ENCODE measurements at regions of chr9 and their contacts with region 1.

Region 1: DNA sequence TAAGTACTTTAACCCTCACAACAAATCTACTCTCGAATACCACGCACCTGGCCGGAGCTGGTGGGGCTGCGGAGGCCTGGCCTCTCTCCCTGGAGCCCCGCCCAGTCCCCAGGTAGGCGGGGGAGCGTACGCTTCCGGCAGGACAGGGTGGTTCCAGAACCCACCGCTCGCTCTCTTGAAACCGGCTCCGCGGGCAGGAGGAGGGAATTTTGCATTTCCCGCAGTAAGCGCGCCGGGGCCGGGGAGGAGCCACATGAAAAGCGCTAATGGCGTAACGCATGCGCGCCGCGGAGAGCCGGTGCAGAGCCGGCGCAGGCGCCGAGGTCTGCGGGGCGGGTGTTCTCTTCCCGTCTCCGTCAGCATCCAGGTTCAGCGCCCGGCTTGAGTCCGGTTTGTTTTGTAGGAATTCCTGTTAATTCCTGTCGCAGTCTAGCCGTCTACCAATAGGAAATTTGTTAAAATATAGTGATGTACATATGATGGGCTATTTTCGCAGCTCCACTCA is 20.8 kb downstream of the CAVIN4 start:
- DNase-seq: peak; percentile 72 to 84 (median 80)
- ATAC-seq: peak; percentile 86
- H3K4me3 ChIP-seq: peak overlapping the region; percentile 65
- H3K4me3 Mint-ChIP-seq: peak overlapping the region; percentile 68 to 90 (median 82)
- H3K27ac ChIP-seq: peak overlapping the region; percentile 36
- H3K27ac Mint-ChIP-seq: peak overlapping the region in 8 of 9 donors; percentile 66 to 90 (median 78)
- H3K4me1 ChIP-seq: peaks cover 7 to 8% of the 10 kb centered on the region in 2 donors
- H3K4me1 Mint-ChIP-seq: peaks cover 12 to 30% (median 22%) of the 10 kb centered on the region in 7 donors
- H3K27me3 ChIP-seq: no peaks in the 10 kb centered on the region
- H3K27me3 Mint-ChIP-seq: peaks cover 0 to 27% (median 0%) of the 10 kb centered on the region in 5 donors

Region 2: GRCh38 chr9:99221621-99222415 is 1376.9 kb before region 1 on chr9 and contains the starts of genes ALG2 and SEC61B:
- CTCF ChIA-PET with region 1: no interaction called
- POLR2A ChIA-PET with region 1: no interaction called
- intact Hi-C with region 1: loop called in 1 of 2 experiments (anchors 1 kb)
- DNase-seq: peak; percentile 86 to 94 (median 91)
- ATAC-seq: peak; percentile 93
- H3K4me3 ChIP-seq: peak within 1 kb of the TSS; percentile 90
- H3K4me3 Mint-ChIP-seq: peak within 1 kb of the TSS; percentile 92 to 100 (median 99)
- H3K27ac ChIP-seq: peak within 1 kb of the TSS; percentile 86
- H3K27ac Mint-ChIP-seq: peak within 1 kb of the TSS; percentile 99 to 100 (median 100)
- H3K4me1 ChIP-seq: peaks cover 21 to 29% of the 10 kb centered on the region in 2 donors
- H3K4me1 Mint-ChIP-seq: peaks cover 48 to 91% (median 81%) of the 10 kb centered on the region in 7 donors
- H3K27me3 ChIP-seq: no peaks in the 10 kb centered on the region
- H3K27me3 Mint-ChIP-seq: no peaks in the 10 kb centered on the region
- total RNA-seq, gene ALG2: 13.9 to 33.7 (median 25.2) TPM
- total RNA-seq, gene SEC61B: 50.4 to 165 (median 54.6) TPM

Region 3: GRCh38 chr9:99906403-99907207 is 692.1 kb before region 1 on chr9 and contains the start of gene STX17:
- CTCF ChIA-PET with region 1: no interaction called
- POLR2A ChIA-PET with region 1: interaction called, 3 read pairs
- intact Hi-C with region 1: loop called in 1 of 2 experiments (anchors 5 kb)
- DNase-seq: peak; percentile 78 to 94 (median 88)
- ATAC-seq: peak; percentile 90
- H3K4me3 ChIP-seq: peak within 1 kb of the TSS; percentile 96
- H3K4me3 Mint-ChIP-seq: peak within 1 kb of the TSS; percentile 92 to 99 (median 97)
- H3K27ac ChIP-seq: peak within 1 kb of the TSS; percentile 99
- H3K27ac Mint-ChIP-seq: peak within 1 kb of the TSS; percentile 96 to 100 (median 99)
- H3K4me1 ChIP-seq: peaks cover 14 to 17% of the 10 kb centered on the region in 2 donors
- H3K4me1 Mint-ChIP-seq: peaks cover 29 to 46% (median 40%) of the 10 kb centered on the region in 7 donors
- H3K27me3 ChIP-seq: no peaks in the 10 kb centered on the region
- H3K27me3 Mint-ChIP-seq: peaks cover 0 to 14% (median 7%) of the 10 kb centered on the region in 5 donors
- total RNA-seq, gene STX17: 34.2 to 63.2 (median 51.2) TPM

Region 4: GRCh38 chr9:100322954-100323536 is 275.6 kb before region 1 on chr9:
- CTCF ChIA-PET with region 1: no interaction called
- POLR2A ChIA-PET with region 1: no interaction called
- intact Hi-C with region 1: loop called (anchors 5 to 10 kb)
- DNase-seq: no peak
- ATAC-seq: no peak
- H3K4me3 ChIP-seq: no peak overlapping the region
- H3K4me3 Mint-ChIP-seq: no peak overlapping the region
- H3K27ac ChIP-seq: no peak overlapping the region
- H3K27ac Mint-ChIP-seq: peak overlapping the region in 2 of 9 donors; percentile 14 to 57
- H3K4me1 ChIP-seq: no peaks in the 10 kb centered on the region
- H3K4me1 Mint-ChIP-seq: peaks cover 0 to 27% (median 16%) of the 10 kb centered on the region in 7 donors
- H3K27me3 ChIP-seq: no peaks in the 10 kb centered on the region
- H3K27me3 Mint-ChIP-seq: no peaks in the 10 kb centered on the region

Region 5: DNA sequence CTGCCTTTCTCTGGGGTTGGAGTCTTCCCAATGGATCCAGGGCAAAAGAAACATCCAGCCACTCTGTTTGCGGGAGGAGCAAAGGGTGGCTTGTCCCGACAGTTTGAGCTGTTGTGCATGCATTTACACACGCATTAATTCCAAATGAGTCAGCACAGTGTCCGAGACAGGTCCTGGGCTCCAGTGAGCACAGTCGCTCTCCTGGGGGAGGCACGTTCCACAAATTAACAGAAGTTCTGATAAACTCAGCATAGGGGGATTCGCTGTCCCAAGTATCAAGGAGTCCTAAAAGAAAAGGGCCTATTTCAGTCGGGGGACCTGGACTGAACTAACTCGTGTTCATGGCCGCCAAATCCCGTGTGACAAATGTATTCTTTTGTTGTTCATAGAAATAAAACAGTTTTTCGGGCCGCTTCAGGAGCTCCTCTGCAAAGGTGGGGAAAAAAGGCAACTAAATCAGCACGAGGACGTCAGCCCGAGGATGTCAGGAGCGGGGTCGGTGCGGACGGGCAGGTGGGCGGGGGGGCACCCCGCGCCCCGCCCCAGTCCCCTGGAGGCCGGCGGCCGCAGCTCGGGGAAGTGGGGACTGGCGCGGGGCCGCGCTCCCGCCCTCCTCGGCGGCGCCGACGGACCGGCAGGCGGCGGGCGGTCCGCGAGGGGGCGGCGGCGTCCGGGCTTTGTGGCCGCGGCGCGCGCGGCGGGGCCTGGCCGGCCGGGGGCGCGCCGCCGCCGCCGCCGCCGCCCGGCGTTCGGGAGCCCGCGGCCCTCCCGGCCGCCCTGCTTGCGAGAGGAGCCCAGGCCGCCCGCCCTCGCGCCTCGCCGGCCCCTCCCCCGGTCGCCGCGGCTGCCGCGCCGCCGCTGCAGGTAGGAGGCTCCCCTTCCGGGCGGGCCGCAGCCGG is 171.9 kb before region 1 on chr9 and contains the start of gene MSANTD3:
- CTCF ChIA-PET with region 1: no interaction called
- POLR2A ChIA-PET with region 1: no interaction called
- intact Hi-C with region 1: loop called in 1 of 2 experiments (anchors 5 kb)
- DNase-seq: peak; percentile 22 to 67 (median 44)
- ATAC-seq: peak; percentile 87
- H3K4me3 ChIP-seq: peak within 1 kb of the TSS; percentile 73
- H3K4me3 Mint-ChIP-seq: peak within 1 kb of the TSS; percentile 90 to 99 (median 96)
- H3K27ac ChIP-seq: peak within 1 kb of the TSS; percentile 68
- H3K27ac Mint-ChIP-seq: peak within 1 kb of the TSS; percentile 84 to 98 (median 93)
- H3K4me1 ChIP-seq: peaks cover 7 to 8% of the 10 kb centered on the region in 2 donors
- H3K4me1 Mint-ChIP-seq: peaks cover 22 to 48% (median 42%) of the 10 kb centered on the region in 7 donors
- H3K27me3 ChIP-seq: no peaks in the 10 kb centered on the region
- H3K27me3 Mint-ChIP-seq: peaks cover 0 to 18% (median 2%) of the 10 kb centered on the region in 5 donors
- total RNA-seq, gene MSANTD3: 6.8 to 13.4 (median 12.0) TPM

Region 6: DNA sequence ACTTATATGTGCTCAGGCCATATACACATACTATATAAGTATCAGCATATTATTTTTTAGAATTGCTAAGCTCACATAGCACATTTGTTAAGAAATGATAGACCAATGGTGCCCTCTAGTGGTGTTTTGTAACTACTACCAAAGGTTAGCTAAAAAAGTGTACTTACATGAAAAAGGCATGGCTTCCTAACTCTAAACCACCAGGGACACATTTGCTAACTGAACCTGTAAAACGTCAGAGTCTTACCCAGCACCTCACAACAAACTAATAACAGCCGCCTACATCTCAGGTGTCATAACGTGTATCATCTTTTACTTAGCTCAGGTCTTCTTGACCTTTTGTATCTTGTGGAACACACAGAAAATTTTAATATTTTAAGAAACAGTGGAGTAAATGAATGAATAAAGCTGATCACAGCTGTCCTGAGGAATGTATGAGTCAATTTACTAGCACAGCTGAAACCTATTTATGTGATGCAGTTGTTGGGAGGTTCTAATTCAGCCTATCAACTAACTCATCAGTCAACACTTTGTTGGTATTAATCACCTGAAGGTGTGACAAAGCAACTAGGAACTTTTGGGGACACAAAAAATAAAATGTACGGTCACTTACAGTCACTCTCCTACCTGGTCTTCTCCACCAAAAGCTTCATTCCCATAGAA is 713.2 kb after region 1 on chr9:
- CTCF ChIA-PET with region 1: interaction called, 5 read pairs
- POLR2A ChIA-PET with region 1: no interaction called
- intact Hi-C with region 1: loop called (anchors 1 kb)
- DNase-seq: peak in 7 of 9 donors; percentile 17 to 58 (median 54)
- ATAC-seq: peak; percentile 71
- H3K4me3 ChIP-seq: no peak overlapping the region
- H3K4me3 Mint-ChIP-seq: no peak overlapping the region
- H3K27ac ChIP-seq: no peak overlapping the region
- H3K27ac Mint-ChIP-seq: peak overlapping the region in 1 of 9 donors; percentile 39
- H3K4me1 ChIP-seq: no peaks in the 10 kb centered on the region
- H3K4me1 Mint-ChIP-seq: no peaks in the 10 kb centered on the region
- H3K27me3 ChIP-seq: no peaks in the 10 kb centered on the region
- H3K27me3 Mint-ChIP-seq: peaks cover 0 to 22% (median 7%) of the 10 kb centered on the region in 5 donors